H1 (cell line): ENCODE measurements at regions of chr1 and their contacts with region 1.

Region 1: DNA sequence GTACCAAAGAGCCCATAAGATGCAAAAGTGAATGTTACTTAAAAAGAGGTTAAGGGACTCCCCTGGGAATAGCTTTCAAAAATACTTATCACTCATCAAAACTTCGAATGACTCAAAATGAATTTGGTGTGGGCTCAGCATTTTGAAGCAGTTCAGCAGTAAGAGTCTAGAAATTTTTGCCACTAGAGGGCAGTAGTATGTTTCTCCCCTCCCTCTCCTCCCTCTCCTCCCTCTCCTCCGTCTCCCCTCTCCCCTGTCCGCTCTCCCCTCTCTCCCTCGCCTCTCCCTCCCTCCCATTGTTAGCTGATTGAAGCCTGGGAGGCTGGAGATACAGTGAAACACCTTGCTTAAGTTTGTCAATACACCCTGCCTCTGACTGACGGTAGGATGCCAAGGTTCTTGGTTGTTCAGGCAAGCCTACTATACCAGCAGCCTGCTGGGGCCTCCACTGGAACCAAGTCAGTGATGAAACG is 70.8 kb upstream of the TENT5C start:
- DNase-seq: peak; percentile 34 to 59
- H3K4me3 ChIP-seq: no peak overlapping the region
- H3K27ac ChIP-seq: no peak overlapping the region
- H3K4me1 ChIP-seq: no peaks in the 10 kb centered on the region
- H3K27me3 ChIP-seq: no peaks in the 10 kb centered on the region
- CTCF ChIP-seq: peak; percentile 28 to 72 (median 47)
- EP300 ChIP-seq: no peak
- POLR2A ChIP-seq: no peak
- RAD21 ChIP-seq: peak; percentile 65 to 67

Region 2: GRCh38 chr1:117512743-117513321 is 22.2 kb before region 1 on chr1:
- CTCF ChIA-PET with region 1: interaction called, 14 read pairs
- POLR2A ChIA-PET with region 1: no interaction called
- DNase-seq: no peak
- H3K4me3 ChIP-seq: no peak overlapping the region
- H3K27ac ChIP-seq: no peak overlapping the region
- H3K4me1 ChIP-seq: no peaks in the 10 kb centered on the region
- H3K27me3 ChIP-seq: no peaks in the 10 kb centered on the region
- CTCF ChIP-seq: peak in 2 of 3 experiments; percentile 28 to 32; a peak in 2 of 4 replicates
- EP300 ChIP-seq: no peak
- POLR2A ChIP-seq: no peak
- RAD21 ChIP-seq: peak in 1 of 2 experiments; percentile 65; a peak in 3 of 4 replicates

Region 3: DNA sequence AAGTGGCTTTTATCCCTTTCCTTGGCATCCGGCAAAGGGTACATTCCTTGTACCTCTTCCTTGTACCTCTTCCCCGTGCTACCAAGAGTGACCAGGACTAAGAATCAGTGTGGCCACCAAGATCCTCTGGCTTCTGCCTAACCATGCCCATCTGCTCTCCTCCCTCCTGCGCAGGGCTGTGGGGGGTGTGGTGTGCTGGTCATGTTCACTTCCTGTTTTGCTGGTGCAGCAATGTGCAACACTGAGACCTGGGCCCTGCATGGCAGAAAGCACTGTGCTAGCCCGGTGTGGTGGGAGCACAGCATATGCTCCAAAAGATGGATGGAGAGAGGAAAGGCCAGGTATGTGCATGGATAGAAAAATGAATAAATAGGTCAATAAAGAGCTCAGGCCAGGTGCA is 37.5 kb after region 1 on chr1:
- CTCF ChIA-PET with region 1: interaction called, 25 read pairs
- POLR2A ChIA-PET with region 1: no interaction called
- DNase-seq: no peak
- H3K4me3 ChIP-seq: no peak overlapping the region
- H3K27ac ChIP-seq: no peak overlapping the region
- H3K4me1 ChIP-seq: peaks cover 0 to 9% (median 1%) of the 10 kb centered on the region in 4 experiments; a peak in 2 of 7 replicates
- H3K27me3 ChIP-seq: no peaks in the 10 kb centered on the region; a peak in 2 of 7 replicates
- CTCF ChIP-seq: no peak
- EP300 ChIP-seq: no peak
- POLR2A ChIP-seq: no peak
- RAD21 ChIP-seq: no peak

Region 4: DNA sequence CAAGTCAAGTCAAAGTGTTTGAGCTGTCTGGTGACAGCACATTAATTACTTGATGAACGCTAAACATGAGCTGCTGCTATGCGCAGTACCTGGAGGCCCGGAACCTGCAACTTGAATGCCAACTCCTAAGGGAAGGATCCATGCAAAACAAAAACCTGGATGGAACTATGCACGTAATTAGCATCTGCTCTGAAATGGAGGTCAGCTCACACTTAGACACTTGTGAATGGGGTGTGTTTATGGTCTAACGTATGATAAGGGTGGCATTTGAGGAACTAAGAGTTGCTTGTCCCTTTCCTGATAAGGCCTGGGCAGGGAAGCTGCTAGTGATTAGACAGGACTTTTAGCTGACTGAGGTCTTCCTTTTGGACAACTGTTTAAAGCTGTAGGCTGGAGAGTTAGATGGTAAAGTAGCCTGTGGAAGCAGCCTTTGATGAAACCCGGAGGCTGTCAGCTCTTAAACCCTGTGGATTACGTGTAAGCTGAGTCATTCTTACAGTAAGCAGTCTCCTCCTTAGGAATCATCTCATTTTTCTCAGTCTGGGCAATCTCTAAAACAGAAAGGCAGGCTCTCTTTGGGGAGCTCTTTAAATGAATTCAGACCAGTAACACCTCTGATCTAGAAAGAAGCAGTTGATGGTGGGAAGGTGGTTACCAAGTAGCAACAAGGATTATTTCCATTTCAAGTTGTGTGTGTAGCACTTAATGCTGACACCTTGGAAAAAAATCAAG is 77.7 kb after region 1 on chr1:
- CTCF ChIA-PET with region 1: interaction called, 10 read pairs
- POLR2A ChIA-PET with region 1: no interaction called
- DNase-seq: no peak
- H3K4me3 ChIP-seq: no peak overlapping the region
- H3K27ac ChIP-seq: no peak overlapping the region
- H3K4me1 ChIP-seq: peaks cover 0 to 7% (median 3%) of the 10 kb centered on the region in 4 experiments; a peak in 5 of 7 replicates
- H3K27me3 ChIP-seq: peaks cover 0 to 2% (median 0%) of the 10 kb centered on the region in 4 experiments; a peak in 4 of 7 replicates
- CTCF ChIP-seq: no peak
- EP300 ChIP-seq: no peak
- POLR2A ChIP-seq: no peak
- RAD21 ChIP-seq: no peak

Region 5: DNA sequence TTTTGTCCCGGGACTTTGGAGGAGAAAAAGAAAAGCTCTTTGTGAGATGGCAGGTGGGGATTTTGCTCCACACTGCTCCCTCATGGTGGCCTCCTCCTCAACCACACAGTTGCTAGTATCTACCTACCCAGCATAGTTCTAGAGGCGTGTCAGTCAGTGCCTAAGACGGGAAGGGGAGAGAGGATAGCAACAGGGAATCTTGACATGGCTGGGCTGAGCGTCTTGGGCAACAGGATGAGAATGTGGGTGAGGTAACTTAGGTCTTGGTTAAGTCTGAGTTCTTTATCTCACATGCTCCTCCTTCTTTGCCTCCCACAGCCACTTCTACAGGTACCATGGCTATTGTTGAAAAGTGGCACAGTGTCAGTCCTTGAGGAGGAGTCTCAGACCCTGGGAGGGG is 146.1 kb after region 1 on chr1:
- CTCF ChIA-PET with region 1: interaction called, 14 read pairs
- POLR2A ChIA-PET with region 1: no interaction called
- DNase-seq: no peak
- H3K4me3 ChIP-seq: no peak overlapping the region
- H3K27ac ChIP-seq: no peak overlapping the region
- H3K4me1 ChIP-seq: no peaks in the 10 kb centered on the region
- H3K27me3 ChIP-seq: no peaks in the 10 kb centered on the region
- CTCF ChIP-seq: peak in 2 of 3 experiments; percentile 13 to 30; a peak in 2 of 4 replicates
- EP300 ChIP-seq: no peak
- POLR2A ChIP-seq: no peak
- RAD21 ChIP-seq: peak in 1 of 2 experiments; percentile 37; a peak in 2 of 4 replicates

Region 6: GRCh38 chr1:117710710-117711109 is 175.7 kb after region 1 on chr1:
- CTCF ChIA-PET with region 1: interaction called, 19 read pairs
- POLR2A ChIA-PET with region 1: no interaction called
- DNase-seq: peak in 1 of 2 experiments; percentile 54
- H3K4me3 ChIP-seq: no peak overlapping the region
- H3K27ac ChIP-seq: no peak overlapping the region
- H3K4me1 ChIP-seq: peaks cover 6 to 12% (median 9%) of the 10 kb centered on the region in 4 experiments
- H3K27me3 ChIP-seq: no peaks in the 10 kb centered on the region; a peak in 1 of 7 replicates
- CTCF ChIP-seq: peak; percentile 66 to 81 (median 67)
- EP300 ChIP-seq: no peak
- POLR2A ChIP-seq: no peak
- RAD21 ChIP-seq: peak; percentile 60 to 73